A673 (cell line): ENCODE measurements at regions of chr19 and their contacts with region 1.

Region 1: DNA sequence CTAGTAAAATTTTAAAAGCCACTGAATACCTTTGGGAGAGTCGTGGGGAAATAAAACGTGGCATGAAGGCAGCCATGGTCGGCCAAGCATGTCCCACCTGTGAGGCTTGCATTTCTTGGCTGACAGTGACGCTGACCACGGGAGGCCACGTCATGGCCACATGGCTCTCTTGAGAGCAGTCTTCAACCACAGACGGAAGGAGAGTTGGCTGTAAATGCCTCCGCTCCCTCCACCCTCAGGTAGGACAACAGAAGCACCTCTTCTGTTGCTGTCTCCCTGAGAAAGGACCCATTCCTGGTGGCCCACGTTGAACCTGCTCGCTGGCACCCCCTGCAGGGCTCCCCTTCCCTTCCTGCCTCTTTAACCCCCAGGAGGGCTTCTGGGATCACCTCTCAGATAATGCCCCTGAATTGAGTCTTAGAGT is 10.6 kb upstream of the LRRC25 start:
- DNase-seq: peak; percentile 56
- H3K4me3 ChIP-seq: no peak overlapping the region
- H3K27ac ChIP-seq: no peak overlapping the region
- H3K4me1 ChIP-seq: no peaks in the 10 kb centered on the region
- H3K27me3 ChIP-seq: no peaks in the 10 kb centered on the region
- CTCF ChIP-seq: peak; percentile 72

Region 2: GRCh38 chr19:18192673-18193387 is 215.2 kb before region 1 on chr19 and contains the start of gene MPV17L2:
- CTCF ChIA-PET with region 1: no interaction called
- POLR2A ChIA-PET with region 1: no interaction called
- intact Hi-C with region 1: no loop called
- DNase-seq: peak; percentile 100
- H3K4me3 ChIP-seq: peak within 1 kb of the TSS; percentile 65
- H3K27ac ChIP-seq: peak within 1 kb of the TSS; percentile 82
- H3K4me1 ChIP-seq: peaks cover 15% of the 10 kb centered on the region
- H3K27me3 ChIP-seq: no peaks in the 10 kb centered on the region
- CTCF ChIP-seq: no peak
- total RNA-seq, gene MPV17L2: 20.2 and 21.3 TPM in 2 replicates

Region 3: DNA sequence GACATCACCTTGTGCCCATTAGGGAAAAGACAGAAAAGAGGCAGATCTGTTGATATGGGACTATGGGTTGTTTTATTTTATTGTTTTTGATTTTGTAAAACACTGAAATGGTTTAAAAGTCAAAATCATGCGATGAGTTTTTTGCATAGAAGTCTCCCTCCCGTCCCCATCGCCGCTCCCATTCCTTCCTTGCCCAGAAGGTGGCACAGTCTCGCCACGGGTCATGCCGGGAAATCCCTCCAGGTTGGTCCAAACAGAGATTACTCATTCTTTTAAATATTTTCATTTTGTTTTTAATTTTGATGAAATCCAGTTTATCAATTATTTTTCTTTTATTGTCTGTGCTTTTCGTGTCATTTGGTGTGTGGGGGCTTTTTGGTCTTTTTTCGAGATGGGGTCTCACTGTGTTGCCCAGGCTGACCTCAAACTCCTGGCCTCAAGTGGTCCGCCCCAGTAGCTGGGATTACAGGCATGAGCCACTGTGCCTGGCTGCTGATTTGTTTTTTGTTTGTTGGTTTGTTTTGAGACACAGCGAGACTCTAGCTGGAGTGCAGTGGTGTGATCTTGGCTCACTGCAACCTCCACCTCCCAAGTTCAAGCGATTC is 58.4 kb before region 1 on chr19:
- CTCF ChIA-PET with region 1: interaction called, 9 read pairs
- POLR2A ChIA-PET with region 1: no interaction called
- intact Hi-C with region 1: loop called (anchors 1 kb)
- DNase-seq: peak; percentile 69
- H3K4me3 ChIP-seq: no peak overlapping the region
- H3K27ac ChIP-seq: no peak overlapping the region
- H3K4me1 ChIP-seq: peaks cover 7% of the 10 kb centered on the region
- H3K27me3 ChIP-seq: no peaks in the 10 kb centered on the region
- CTCF ChIP-seq: peak; percentile 92

Region 4: DNA sequence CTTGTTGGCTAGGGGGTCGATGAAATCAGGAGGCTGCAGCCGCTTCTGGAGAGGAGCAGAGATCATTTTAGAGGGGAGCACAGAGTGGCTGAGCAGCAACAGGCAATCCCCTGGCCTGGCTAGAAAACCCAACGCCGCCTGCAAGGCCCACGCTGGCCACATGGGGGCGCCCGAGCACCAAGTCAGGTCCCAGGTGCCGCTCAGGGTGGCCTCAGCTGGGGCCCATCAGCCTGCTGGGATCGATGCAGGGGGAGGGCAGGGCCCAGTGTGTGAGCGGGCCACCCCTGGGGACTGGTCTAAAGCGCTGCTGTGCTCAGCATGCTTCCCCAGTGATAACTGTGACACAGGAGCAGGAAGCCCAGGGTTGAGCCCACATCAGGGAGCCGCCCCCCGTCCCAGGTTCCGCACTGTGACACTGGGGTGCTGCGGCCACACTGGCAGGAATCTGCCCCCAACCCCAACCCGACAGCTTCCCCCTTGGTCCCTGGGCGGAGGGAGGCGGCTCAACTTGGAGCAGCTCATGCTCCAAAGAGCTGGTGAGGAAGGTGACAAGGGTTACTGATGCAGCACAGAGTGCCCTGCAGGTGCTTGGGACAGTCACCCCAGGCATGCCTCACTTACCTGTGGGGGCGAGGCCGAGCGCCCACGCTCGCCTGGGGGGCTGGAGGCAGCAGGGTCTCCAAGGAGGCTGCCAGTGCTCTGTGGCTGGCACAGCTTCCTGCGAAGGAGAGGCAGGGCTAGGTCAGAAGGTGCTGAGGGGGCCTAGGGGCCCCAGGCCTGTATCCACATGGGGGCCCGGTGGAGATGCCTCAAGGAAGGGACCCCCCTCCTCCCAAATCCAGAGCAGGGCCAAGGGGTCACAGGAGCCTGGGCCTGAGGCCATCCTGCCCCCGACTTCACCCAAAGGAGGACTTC is 43.1 kb after region 1 on chr19:
- CTCF ChIA-PET with region 1: no interaction called
- POLR2A ChIA-PET with region 1: no interaction called
- intact Hi-C with region 1: no loop called
- DNase-seq: peak; percentile 84
- H3K4me3 ChIP-seq: no peak overlapping the region
- H3K27ac ChIP-seq: peak overlapping the region; percentile 35
- H3K4me1 ChIP-seq: peaks cover 4% of the 10 kb centered on the region
- H3K27me3 ChIP-seq: no peaks in the 10 kb centered on the region
- CTCF ChIP-seq: peak; percentile 99